Heart left ventricle (tissue), 16 donors: ENCODE measurements at regions of chr4 and their contacts with region 1.

Region 1: GRCh38 chr4:47786958-47787370 is 50.9 kb downstream of the CORIN start:
- DNase-seq: no peak
- ATAC-seq: no peak
- H3K4me3 ChIP-seq: no peak overlapping the region
- H3K27ac ChIP-seq: peak overlapping the region in 1 of 12 donors; percentile 33
- H3K4me1 ChIP-seq: peaks cover 0 to 20% (median 0%) of the 10 kb centered on the region in 12 donors
- H3K27me3 ChIP-seq: no peaks in the 10 kb centered on the region
- CTCF ChIP-seq: no peak
- POLR2A ChIP-seq: no peak

Region 2: DNA sequence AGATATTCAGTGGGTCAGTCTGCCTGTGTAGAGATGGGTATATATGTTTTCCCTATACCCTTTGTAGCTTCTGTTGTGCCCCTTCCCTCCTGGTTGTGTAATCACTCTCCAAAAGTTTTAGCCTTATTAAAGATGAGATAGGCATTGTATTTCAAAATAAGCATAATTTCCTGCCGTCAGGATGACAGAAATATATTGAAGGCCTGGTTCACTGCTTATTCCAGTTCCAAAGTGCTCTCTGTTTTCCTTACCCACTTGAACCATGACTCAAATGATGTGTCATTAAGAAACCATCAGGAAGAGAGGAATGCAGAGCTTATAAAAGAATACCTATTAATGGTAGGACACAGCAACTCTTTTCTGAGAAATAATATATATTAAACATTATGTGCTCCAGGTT is 577.1 kb before region 1 on chr4:
- intact Hi-C with region 1: no loop called
- DNase-seq: no peak
- ATAC-seq: no peak
- H3K4me3 ChIP-seq: no peak overlapping the region
- H3K27ac ChIP-seq: no peak overlapping the region
- H3K4me1 ChIP-seq: no peaks in the 10 kb centered on the region
- H3K27me3 ChIP-seq: no peaks in the 10 kb centered on the region
- CTCF ChIP-seq: no peak
- POLR2A ChIP-seq: no peak

Region 3: GRCh38 chr4:47729131-47729680 is 57.8 kb before region 1 on chr4:
- intact Hi-C with region 1: no loop called
- DNase-seq: no peak
- ATAC-seq: peak in 1 of 4 donors; percentile 20
- H3K4me3 ChIP-seq: no peak overlapping the region
- H3K27ac ChIP-seq: peak overlapping the region in 2 of 12 donors; percentile 15 to 17
- H3K4me1 ChIP-seq: peaks cover 0 to 13% (median 0%) of the 10 kb centered on the region in 12 donors
- H3K27me3 ChIP-seq: peaks cover 0 to 7% (median 0%) of the 10 kb centered on the region in 9 donors
- CTCF ChIP-seq: no peak
- POLR2A ChIP-seq: no peak

Region 4: GRCh38 chr4:47824840-47825239 is 37.9 kb after region 1 on chr4:
- intact Hi-C with region 1: loop called in 2 of 10 experiments (anchors 2 to 5 kb)
- DNase-seq: peak; percentile 37 to 89 (median 68)
- ATAC-seq: peak; percentile 85 to 95 (median 94)
- H3K4me3 ChIP-seq: peak overlapping the region in 3 of 12 donors; percentile 0 to 22 (median 14)
- H3K27ac ChIP-seq: peak overlapping the region in 11 of 12 donors; percentile 55 to 85 (median 75)
- H3K4me1 ChIP-seq: peaks cover 0 to 31% (median 0%) of the 10 kb centered on the region in 12 donors
- H3K27me3 ChIP-seq: no peaks in the 10 kb centered on the region
- CTCF ChIP-seq: no peak
- POLR2A ChIP-seq: no peak

Region 5: GRCh38 chr4:48008021-48008596 is 221.1 kb after region 1 on chr4:
- intact Hi-C with region 1: no loop called
- DNase-seq: no peak
- ATAC-seq: no peak
- H3K4me3 ChIP-seq: no peak overlapping the region
- H3K27ac ChIP-seq: no peak overlapping the region
- H3K4me1 ChIP-seq: no peaks in the 10 kb centered on the region
- H3K27me3 ChIP-seq: no peaks in the 10 kb centered on the region
- CTCF ChIP-seq: no peak
- POLR2A ChIP-seq: no peak